ENCODE measurements at regions of chr17 and their contacts with region 1.

Region 1: DNA sequence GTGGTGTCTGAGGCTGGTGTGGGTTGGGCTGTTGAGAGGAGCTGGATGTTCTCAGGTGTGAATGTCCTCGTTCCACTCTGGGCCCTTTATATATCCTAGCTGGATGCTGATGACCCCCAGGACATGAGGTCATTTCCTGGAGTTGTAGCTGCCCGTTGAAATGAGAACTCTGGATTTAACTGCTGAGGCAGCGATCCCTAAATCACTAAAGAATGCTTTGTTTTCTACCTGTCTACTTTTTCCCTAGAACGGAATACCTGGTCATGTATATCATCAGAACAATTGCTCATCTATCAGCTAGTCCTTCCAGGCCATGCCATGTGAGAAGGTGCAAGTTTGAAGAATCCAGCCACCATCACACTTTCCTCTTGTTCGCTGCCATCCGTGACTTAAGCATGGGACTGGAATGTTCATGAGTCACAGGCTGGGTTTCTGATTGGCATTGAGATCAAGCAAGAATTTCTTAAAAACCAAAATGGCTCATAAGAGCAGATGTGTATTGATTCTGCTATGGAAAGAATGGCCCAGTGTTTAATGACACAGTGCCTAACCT is at the start of gene KRTAP2-3:
- DNase-seq: peak; percentile 36
- ATAC-seq: no peak
- H3K4me3 ChIP-seq: no peak within 1 kb of the TSS; a peak in 1 of 6 replicates
- H3K27ac ChIP-seq: peak within 1 kb of the TSS; percentile 79
- H3K4me1 ChIP-seq: peaks cover 55% of the 10 kb centered on the region
- H3K27me3 ChIP-seq: no peaks in the 10 kb centered on the region
- CTCF ChIP-seq: no peak
- EP300 ChIP-seq: no peak
- POLR2A ChIP-seq: no peak
- RAD21 ChIP-seq: no peak
- total RNA-seq, gene KRTAP2-3: not detected in 2 replicates

Region 2: GRCh38 chr17:41008805-41009204 is 51.3 kb before region 1 on chr17 and contains the start of gene KRTAP3-1:
- CTCF ChIA-PET with region 1: no interaction called
- POLR2A ChIA-PET with region 1: interaction called, 14 read pairs
- in situ Hi-C with region 1: loop called (anchors 5 kb)
- intact Hi-C with region 1: loop called (anchors 2 kb)
- DNase-seq: peak; percentile 28
- ATAC-seq: peak; percentile 74
- H3K4me3 ChIP-seq: no peak within 1 kb of the TSS; a peak in 1 of 6 replicates
- H3K27ac ChIP-seq: peak within 1 kb of the TSS; percentile 70
- H3K4me1 ChIP-seq: peaks cover 71% of the 10 kb centered on the region
- H3K27me3 ChIP-seq: no peaks in the 10 kb centered on the region
- CTCF ChIP-seq: no peak
- EP300 ChIP-seq: no peak
- POLR2A ChIP-seq: no peak
- RAD21 ChIP-seq: no peak
- total RNA-seq, gene KRTAP3-1: 0.29 and 0.81 TPM in 2 replicates